Activated CD4-positive, alpha-beta memory T cell treated with anti-CD3 and anti-CD28 coated beads for 36 hours (primary cell): ENCODE measurements at regions of chr13 and their contacts with region 1.

Region 1: DNA sequence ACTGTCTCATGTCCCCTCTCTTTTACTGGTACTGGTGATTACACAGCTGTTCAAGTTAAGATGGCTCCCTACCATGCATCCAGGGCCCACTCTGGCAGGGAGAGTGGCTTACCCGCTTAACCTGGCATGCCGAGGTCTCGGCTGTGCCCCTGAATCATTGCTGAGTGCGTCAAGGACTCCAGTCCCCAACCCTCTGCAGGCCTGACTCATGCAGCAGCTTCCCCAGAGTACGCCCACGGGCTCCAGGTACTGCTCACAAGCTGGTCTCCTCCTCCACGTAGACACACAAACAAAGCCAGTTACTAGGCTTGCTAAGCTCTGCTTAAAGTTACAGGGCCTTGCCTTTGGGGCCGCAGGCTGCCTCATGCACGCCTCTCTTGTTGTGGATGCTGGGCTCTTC is 447.4 kb downstream of the COG6 start:
- DNase-seq: peak; percentile 97
- H3K4me3 Mint-ChIP-seq: peak overlapping the region; percentile 56
- H3K27ac Mint-ChIP-seq: peak overlapping the region; percentile 98
- H3K4me1 Mint-ChIP-seq: peaks cover 55% of the 10 kb centered on the region
- H3K27me3 Mint-ChIP-seq: no peaks in the 10 kb centered on the region

Region 2: DNA sequence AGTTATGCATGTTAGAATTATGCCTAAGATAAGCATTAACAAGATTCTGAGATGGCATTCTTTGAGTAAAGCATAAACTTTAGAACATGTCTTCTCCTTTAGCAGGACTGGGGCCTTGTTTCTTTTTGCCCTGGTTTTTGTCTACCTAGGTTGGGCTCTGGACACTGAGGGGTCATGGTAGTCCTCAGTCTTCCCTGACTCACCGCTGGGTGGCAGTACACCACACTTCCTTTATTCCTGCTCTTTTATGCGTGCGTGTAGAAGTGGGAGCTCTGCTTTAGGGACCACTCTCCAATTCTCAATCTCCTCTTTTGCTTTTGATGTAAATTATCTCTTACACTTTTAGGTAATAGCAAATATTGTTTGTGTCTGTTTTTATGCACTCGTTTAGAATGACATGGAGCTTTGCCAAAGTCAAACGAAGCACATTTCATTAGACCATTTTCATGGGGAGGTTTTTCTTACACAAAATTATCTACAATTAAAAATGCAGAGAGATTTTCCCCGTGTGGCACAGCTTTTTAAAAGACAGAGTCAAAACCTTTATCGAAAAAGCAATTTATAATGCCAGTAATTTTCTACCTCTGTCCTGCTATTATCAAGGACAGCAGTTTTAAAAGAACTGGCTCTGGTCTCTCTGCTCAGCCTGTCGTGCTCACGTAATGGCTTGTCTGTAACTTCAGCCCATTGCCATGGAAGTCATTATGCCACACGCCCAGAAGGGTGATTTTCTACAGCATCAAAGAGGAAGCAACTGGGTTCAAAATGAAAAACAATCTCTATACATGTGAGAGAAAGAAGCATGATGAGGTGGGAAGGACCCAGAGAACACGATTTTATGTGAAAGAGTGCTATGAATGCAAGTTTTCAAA is 33.4 kb before region 1 on chr13:
- CTCF ChIA-PET with region 1: interaction called, 20 read pairs
- POLR2A ChIA-PET with region 1: no interaction called
- intact Hi-C with region 1: loop called (anchors 1 kb)
- DNase-seq: peak; percentile 83
- H3K4me3 Mint-ChIP-seq: no peak overlapping the region
- H3K27ac Mint-ChIP-seq: no peak overlapping the region
- H3K4me1 Mint-ChIP-seq: peaks cover 24% of the 10 kb centered on the region
- H3K27me3 Mint-ChIP-seq: no peaks in the 10 kb centered on the region

Region 3: DNA sequence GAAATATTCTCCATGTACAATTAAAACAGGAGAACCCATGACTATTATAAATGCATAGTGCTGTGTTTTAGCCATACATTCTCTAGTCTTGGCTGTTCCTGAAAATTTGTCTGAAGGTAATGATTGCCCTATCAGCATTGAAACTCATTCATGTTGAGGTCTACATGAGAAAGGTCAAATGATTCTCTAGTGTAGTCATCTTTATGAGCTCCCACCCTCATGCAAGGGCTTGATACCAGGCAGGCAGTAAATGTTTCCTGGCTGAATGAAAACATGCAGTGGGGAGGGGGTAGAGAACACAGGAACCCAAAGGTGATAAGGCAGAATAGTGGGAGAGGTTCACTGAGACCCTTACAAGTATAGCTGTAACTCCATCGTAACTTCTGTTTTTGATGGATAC is 23.1 kb before region 1 on chr13:
- CTCF ChIA-PET with region 1: no interaction called
- POLR2A ChIA-PET with region 1: no interaction called
- intact Hi-C with region 1: no loop called
- DNase-seq: no peak
- H3K4me3 Mint-ChIP-seq: no peak overlapping the region
- H3K27ac Mint-ChIP-seq: no peak overlapping the region
- H3K4me1 Mint-ChIP-seq: no peaks in the 10 kb centered on the region
- H3K27me3 Mint-ChIP-seq: no peaks in the 10 kb centered on the region

Region 4: GRCh38 chr13:40149611-40150274 is 46.9 kb after region 1 on chr13:
- CTCF ChIA-PET with region 1: interaction called, 3 read pairs
- POLR2A ChIA-PET with region 1: interaction called, 8 read pairs
- intact Hi-C with region 1: loop called (anchors 1 kb)
- DNase-seq: no peak
- H3K4me3 Mint-ChIP-seq: no peak overlapping the region
- H3K27ac Mint-ChIP-seq: peak overlapping the region; percentile 18
- H3K4me1 Mint-ChIP-seq: peaks cover 62% of the 10 kb centered on the region
- H3K27me3 Mint-ChIP-seq: no peaks in the 10 kb centered on the region

Region 5: DNA sequence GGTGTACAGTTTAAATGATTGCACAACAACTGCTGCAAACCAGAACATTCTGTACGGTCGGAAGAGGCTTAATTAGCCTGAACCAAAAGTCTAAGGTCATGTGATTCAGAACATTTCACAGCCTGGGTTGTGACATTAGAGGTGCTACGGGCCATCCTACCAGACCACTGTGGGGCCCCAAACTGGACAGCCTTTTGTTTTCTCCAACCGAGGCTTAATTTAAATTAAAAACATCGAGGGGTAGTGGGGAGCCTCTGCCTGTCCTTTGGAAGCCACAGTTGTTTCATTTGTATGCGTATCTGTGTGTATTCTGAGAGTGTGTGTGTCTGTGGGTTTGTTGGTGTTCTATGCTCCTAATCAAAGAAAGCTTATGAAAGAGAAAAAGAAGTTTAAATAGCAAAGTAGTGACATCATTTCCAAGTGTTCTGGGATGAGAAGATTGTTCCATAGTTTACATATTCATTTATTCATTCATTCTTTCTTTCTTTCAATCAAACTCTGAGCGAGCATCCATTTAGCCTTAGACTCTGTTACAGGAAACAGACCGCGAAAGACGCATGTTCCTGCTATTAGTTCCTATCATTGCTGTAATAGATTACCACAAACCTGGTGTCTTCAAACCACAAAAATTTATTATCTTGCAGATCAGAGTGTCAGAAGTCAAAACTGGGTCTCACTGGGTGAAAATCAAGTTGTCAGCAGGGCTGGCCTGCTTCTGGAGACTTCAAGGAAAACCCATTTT is 118.8 kb after region 1 on chr13:
- CTCF ChIA-PET with region 1: interaction called, 4 read pairs
- POLR2A ChIA-PET with region 1: interaction called, 17 read pairs
- intact Hi-C with region 1: loop called (anchors 1 kb)
- DNase-seq: peak; percentile 54
- H3K4me3 Mint-ChIP-seq: peak overlapping the region; percentile 30
- H3K27ac Mint-ChIP-seq: peak overlapping the region; percentile 74
- H3K4me1 Mint-ChIP-seq: peaks cover 63% of the 10 kb centered on the region
- H3K27me3 Mint-ChIP-seq: no peaks in the 10 kb centered on the region

Region 6: GRCh38 chr13:40517486-40518480 is 414.9 kb after region 1 on chr13:
- CTCF ChIA-PET with region 1: interaction called, 3 read pairs
- POLR2A ChIA-PET with region 1: no interaction called
- intact Hi-C with region 1: loop called (anchors 2 kb)
- DNase-seq: peak; percentile 48
- H3K4me3 Mint-ChIP-seq: peak overlapping the region; percentile 61
- H3K27ac Mint-ChIP-seq: peak overlapping the region; percentile 86
- H3K4me1 Mint-ChIP-seq: peaks cover 71% of the 10 kb centered on the region
- H3K27me3 Mint-ChIP-seq: no peaks in the 10 kb centered on the region

Region 7: DNA sequence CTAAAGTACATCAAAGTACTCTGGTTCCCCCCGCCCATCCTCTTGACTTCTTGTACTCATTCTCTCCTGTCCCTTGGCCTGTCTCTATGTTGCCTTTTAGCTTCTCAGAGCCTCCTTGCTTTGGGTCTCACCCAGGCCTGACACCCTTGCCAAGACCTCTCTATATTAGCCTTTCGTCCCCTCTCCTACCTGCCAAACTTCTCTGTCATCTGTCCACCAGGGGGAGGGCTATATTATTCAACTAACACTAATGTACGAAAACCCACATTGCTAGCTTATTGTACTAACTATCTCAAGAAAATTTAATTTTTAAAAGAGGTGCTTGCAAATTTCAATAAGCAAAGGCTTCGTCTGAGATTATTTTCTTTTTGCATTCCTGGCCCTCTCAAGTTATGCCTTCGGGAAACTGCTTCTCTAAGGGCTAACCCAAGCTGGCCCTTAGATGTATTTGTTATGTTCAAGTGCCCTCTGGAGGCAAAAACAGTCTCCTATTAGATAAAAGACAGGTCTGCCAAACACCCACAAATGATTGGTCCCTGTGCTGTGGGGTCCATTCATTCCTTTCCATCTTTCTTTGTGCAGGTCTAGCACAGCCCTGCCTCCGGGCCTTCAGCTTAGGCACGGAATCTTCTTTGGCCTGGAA is 674.4 kb after region 1 on chr13:
- CTCF ChIA-PET with region 1: no interaction called
- POLR2A ChIA-PET with region 1: no interaction called
- intact Hi-C with region 1: loop called (anchors 2 kb)
- DNase-seq: peak; percentile 58
- H3K4me3 Mint-ChIP-seq: peak overlapping the region; percentile 64
- H3K27ac Mint-ChIP-seq: peak overlapping the region; percentile 96
- H3K4me1 Mint-ChIP-seq: peaks cover 30% of the 10 kb centered on the region
- H3K27me3 Mint-ChIP-seq: no peaks in the 10 kb centered on the region